Activated naive CD4-positive, alpha-beta T cell treated with anti-CD3 and anti-CD28 coated beads for 36 hours (primary cell): ENCODE measurements at regions of chr19 and their contacts with region 1.

Region 1: GRCh38 chr19:42219812-42220750 is at the start of gene ZNF526:
- DNase-seq: peak; percentile 97
- H3K4me3 Mint-ChIP-seq: peak within 1 kb of the TSS; percentile 96
- H3K27ac Mint-ChIP-seq: peak within 1 kb of the TSS; percentile 94
- H3K4me1 Mint-ChIP-seq: peaks cover 55% of the 10 kb centered on the region
- H3K27me3 Mint-ChIP-seq: no peaks in the 10 kb centered on the region
- total RNA-seq, gene ZNF526: 11.5 to 11.6 TPM

Region 2: DNA sequence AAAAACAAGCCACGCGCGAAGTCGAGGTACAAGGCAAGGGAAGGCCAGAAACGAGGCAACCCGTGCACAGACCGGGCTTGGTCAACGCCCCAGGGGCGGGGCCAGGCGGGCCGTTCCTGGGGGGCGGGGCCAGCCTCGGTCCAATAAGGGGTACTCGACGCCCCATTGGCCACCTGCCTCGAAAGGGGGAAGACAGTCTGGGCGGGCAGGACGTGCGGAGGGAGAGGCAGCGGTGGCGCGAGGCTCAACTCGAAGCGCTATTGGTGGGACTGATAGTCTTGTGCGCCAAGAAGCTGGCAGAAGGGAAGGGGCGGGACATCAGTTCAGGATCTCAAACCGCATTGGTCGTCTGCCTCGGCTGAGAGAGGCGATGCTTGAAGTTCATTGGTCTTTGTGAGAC is 375.5 kb before region 1 on chr19 and contains the start of gene LYPD4:
- CTCF ChIA-PET with region 1: no interaction called
- intact Hi-C with region 1: no loop called
- DNase-seq: no peak
- H3K4me3 Mint-ChIP-seq: no peak within 1 kb of the TSS
- H3K27ac Mint-ChIP-seq: no peak within 1 kb of the TSS
- H3K4me1 Mint-ChIP-seq: no peaks in the 10 kb centered on the region
- H3K27me3 Mint-ChIP-seq: no peaks in the 10 kb centered on the region
- total RNA-seq, gene LYPD4: not detected

Region 3: DNA sequence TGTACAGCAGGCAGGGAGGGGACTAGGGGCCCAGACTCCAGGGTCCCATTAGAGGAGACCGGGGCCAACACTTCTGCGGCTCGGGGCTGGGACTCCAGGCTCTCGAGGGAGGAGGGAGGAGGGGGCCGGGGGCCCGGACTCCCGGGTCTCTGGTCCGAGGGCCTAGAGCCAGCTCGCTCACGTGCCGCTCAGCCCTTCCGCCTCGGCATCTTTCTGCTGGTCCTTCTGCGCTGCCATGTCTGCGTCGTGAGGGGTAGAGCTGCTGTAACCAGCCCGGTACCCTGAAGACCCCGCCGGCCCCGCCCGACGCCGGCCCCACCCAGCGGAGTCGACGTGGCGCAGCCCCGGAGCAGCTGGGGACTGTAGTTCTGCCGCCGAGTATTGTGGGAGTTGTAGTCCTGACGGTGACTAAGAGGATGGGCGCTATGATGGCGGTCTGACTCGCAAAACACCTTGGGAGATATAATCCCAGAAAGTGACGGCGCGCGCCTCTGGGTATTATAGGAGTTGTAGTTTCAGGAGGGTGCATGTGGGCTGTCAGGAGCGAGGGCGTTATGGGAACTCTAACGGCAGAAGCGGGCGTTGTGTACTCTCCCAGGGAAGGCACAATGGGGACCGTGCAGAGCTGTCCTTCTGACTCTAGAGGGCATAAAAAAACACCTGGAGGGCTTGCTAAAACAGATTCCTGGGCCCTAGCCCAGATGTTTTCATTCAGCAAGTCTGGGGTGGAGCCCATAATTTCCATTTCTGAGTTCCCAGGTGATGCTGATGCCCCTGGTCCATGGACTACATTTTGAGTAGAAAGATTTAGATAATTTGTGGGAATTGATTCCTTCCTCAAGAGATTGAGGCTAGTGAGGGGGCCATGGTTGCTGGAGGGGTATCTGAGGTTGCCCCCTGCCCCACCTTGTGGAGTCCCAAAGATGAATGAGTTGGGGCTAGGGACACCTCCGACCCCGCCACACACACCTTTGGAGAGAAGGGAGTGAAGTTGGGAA is 260.7 kb before region 1 on chr19 and contains the start of gene RABAC1:
- CTCF ChIA-PET with region 1: no interaction called
- intact Hi-C with region 1: loop called (anchors 5 kb)
- DNase-seq: peak; percentile 95
- H3K4me3 Mint-ChIP-seq: peak within 1 kb of the TSS; percentile 95
- H3K27ac Mint-ChIP-seq: peak within 1 kb of the TSS; percentile 81
- H3K4me1 Mint-ChIP-seq: peaks cover 13% of the 10 kb centered on the region
- H3K27me3 Mint-ChIP-seq: no peaks in the 10 kb centered on the region
- total RNA-seq, gene RABAC1: 32.8 TPM

Region 4: GRCh38 chr19:42199440-42200115 is 20.5 kb before region 1 on chr19:
- CTCF ChIA-PET with region 1: interaction called, 4 read pairs
- intact Hi-C with region 1: loop called (anchors 1 kb)
- DNase-seq: peak; percentile 88
- H3K4me3 Mint-ChIP-seq: peak overlapping the region; percentile 58
- H3K27ac Mint-ChIP-seq: peak overlapping the region; percentile 96
- H3K4me1 Mint-ChIP-seq: peaks cover 79% of the 10 kb centered on the region
- H3K27me3 Mint-ChIP-seq: no peaks in the 10 kb centered on the region

Region 5: DNA sequence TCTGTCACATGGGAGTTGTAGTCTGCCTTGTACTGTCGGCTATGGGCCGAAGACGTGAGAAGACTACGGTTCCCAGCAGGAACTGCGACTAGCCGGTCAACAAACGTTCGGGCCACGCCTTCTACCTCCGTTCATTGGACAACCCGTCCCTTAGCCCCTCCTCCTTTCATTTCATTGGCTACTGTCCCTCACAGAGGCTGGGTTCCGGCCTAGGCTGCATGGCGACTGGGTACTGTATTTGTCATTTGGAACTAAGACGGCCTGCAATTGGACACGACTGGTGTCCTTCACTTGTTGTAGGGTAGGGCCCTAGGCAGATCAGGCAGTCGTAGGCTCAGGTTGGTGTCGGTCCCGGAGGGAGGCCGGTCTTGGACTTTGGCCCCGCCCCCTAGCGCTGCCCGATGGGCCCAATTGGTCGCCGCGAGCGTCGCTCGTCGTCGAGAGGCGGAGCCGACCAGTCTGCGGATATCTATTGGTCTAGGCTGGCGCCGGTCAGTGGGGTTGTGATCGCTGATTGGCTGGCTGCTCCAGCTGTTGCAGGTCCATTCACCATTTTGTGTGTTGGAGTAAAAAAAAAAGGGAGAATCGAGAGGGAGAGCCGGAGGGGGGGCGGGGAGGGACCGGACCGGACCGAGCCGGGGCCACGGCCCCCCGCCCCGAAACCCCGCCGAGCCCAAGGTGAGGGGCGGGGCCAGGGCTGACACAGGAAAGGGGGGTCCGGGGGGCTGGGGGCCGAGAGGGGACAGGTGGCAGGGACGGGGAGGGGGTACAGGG is 48.8 kb after region 1 on chr19 and contains the start of gene CIC:
- CTCF ChIA-PET with region 1: no interaction called
- intact Hi-C with region 1: loop called (anchors 1 kb)
- DNase-seq: peak; percentile 100
- H3K4me3 Mint-ChIP-seq: no peak within 1 kb of the TSS
- H3K27ac Mint-ChIP-seq: peak within 1 kb of the TSS; percentile 99
- H3K4me1 Mint-ChIP-seq: peaks cover 30% of the 10 kb centered on the region
- H3K27me3 Mint-ChIP-seq: no peaks in the 10 kb centered on the region
- total RNA-seq, gene CIC: 60.2 to 61.5 TPM

Region 6: DNA sequence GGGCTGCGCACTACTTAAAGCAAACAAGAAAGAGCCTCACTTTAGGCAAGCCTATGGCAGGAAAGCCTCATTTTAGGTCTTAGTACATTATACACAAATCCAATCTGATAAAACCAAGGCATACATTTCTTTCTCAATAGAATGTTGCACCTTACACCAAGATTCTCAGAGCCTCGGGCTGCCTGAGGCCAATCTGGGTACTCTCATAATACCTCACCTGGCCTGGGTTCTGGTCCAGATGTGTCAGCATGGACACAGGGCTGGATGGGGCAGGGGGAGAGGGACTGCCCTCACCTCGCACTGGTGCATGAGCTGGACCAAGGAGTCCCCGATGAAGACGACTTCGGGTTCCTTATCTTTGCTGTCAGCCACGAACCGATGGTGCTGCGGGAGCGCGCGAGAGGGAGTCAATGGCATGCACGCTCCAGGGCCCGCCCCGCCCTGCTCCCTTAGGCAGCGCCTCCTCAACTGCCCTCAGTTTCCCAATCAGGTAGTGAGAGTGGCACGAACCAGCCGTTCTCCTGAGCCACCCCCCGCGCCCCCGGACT is 81.6 kb after region 1 on chr19 and contains the start of gene PRR19:
- CTCF ChIA-PET with region 1: interaction called, 3 read pairs
- intact Hi-C with region 1: loop called (anchors 2 kb)
- DNase-seq: no peak
- H3K4me3 Mint-ChIP-seq: peak within 1 kb of the TSS; percentile 85
- H3K27ac Mint-ChIP-seq: peak within 1 kb of the TSS; percentile 85
- H3K4me1 Mint-ChIP-seq: peaks cover 19% of the 10 kb centered on the region
- H3K27me3 Mint-ChIP-seq: no peaks in the 10 kb centered on the region
- total RNA-seq, gene PRR19: 0.27 to 0.43 TPM

Region 7: GRCh38 chr19:42468273-42468796 is 248.3 kb after region 1 on chr19:
- CTCF ChIA-PET with region 1: no interaction called
- intact Hi-C with region 1: no loop called
- DNase-seq: no peak
- H3K4me3 Mint-ChIP-seq: no peak overlapping the region
- H3K27ac Mint-ChIP-seq: no peak overlapping the region
- H3K4me1 Mint-ChIP-seq: peaks cover 14% of the 10 kb centered on the region
- H3K27me3 Mint-ChIP-seq: no peaks in the 10 kb centered on the region